ENCODE measurements at regions of chr6 and their contacts with region 1.

Region 1: DNA sequence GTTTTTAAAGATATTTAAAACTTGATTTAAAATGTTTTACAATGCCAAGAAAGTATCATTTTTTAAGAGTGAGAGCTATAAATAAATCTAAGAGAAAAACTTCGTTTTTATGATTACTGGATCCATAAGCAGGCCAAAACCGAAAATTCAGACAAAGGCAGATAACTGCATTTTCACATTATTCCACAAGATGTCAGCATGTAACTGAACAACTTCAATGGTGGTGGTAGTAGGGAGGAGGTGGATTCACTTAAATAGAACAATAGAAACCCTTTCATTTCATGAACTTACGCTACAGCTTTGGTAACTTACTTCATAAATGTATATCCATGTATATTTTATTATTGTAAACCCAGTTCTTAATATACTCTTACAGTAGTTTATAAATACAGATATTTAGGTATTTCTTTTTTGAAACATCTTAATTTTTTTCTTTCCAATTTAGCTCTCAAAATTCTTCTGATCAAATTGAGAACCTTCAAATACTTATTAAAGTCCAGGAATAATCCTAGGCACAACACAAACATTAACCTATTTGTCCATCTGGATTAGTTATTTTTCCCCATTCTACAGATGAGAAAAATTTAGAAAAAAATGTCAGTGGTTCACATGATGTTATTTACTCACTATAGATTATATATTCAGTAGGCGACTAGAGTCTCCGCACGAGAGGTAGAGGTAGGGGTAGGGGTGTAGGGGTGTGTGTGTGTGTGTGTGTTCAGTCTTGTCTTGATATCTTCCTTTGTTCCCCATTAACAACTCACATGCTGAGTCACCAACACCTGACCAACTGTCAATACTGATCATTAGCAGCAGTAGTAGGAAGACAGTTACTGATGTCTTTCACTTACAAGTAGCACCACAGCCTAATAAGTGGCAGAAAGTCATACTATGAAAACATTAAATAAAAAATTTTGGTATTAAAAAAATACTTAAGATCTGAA is 111.5 kb downstream of the ARHGAP18 start:
- DNase-seq: peak; percentile 84
- ATAC-seq: peak; percentile 91
- H3K4me3 ChIP-seq: no peak overlapping the region
- H3K27ac ChIP-seq: no peak overlapping the region
- H3K4me1 ChIP-seq: no peaks in the 10 kb centered on the region; the same call in 1 of the 2 replicates
- H3K27me3 ChIP-seq: no peaks in the 10 kb centered on the region
- CTCF ChIP-seq: peak; percentile 92
- POLR2A ChIP-seq: 0 out of 2 replicates have a peak, but pooled peaks have one; percentile 23
- RAD21 ChIP-seq: peak; percentile 94

Region 2: GRCh38 chr6:129498950-129499842 is 99.3 kb before region 1 on chr6:
- CTCF ChIA-PET with region 1: no interaction called
- POLR2A ChIA-PET with region 1: no interaction called
- dilution Hi-C with region 1: no loop called
- in situ Hi-C with region 1: no loop called
- intact Hi-C with region 1: loop called (anchors 1 kb)
- DNase-seq: peak; percentile 61
- ATAC-seq: peak; percentile 46
- H3K4me3 ChIP-seq: no peak overlapping the region
- H3K27ac ChIP-seq: peak overlapping the region; percentile 7; the same call in 1 of the 2 replicates
- H3K4me1 ChIP-seq: peaks cover 13% of the 10 kb centered on the region
- H3K27me3 ChIP-seq: no peaks in the 10 kb centered on the region
- CTCF ChIP-seq: peak; percentile 66
- POLR2A ChIP-seq: no peak
- RAD21 ChIP-seq: peak; percentile 71

Region 3: DNA sequence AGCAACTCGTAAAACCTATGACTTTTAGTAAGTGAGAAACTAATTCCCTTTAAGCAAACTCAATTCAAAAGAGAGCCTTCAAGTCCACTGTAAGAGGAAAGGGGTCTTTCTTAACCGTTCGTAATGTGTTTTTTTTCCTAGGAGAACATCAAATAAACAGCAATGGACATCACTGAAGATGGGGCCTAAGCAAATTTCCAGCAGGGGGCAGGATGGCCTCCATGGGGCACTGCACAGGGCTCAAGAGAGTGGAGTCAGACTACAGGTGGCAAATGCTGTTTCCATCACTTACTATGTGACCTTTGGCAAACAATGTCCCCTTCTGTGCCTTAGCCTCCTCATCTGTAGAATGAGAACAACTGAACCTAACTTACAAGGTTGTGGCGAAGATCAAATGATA is 22.7 kb after region 1 on chr6:
- CTCF ChIA-PET with region 1: no interaction called
- POLR2A ChIA-PET with region 1: no interaction called
- dilution Hi-C with region 1: no loop called
- in situ Hi-C with region 1: no loop called
- intact Hi-C with region 1: no loop called
- DNase-seq: no peak
- ATAC-seq: no peak
- H3K4me3 ChIP-seq: no peak overlapping the region
- H3K27ac ChIP-seq: no peak overlapping the region
- H3K4me1 ChIP-seq: 0 out of 2 replicates have a peak, but pooled peaks cover 1% of the 10 kb centered on the region
- H3K27me3 ChIP-seq: no peaks in the 10 kb centered on the region
- CTCF ChIP-seq: 0 out of 2 replicates have a peak, but pooled peaks have one; percentile 25
- POLR2A ChIP-seq: no peak
- RAD21 ChIP-seq: no peak; the same call in 1 of the 2 replicates

Region 4: DNA sequence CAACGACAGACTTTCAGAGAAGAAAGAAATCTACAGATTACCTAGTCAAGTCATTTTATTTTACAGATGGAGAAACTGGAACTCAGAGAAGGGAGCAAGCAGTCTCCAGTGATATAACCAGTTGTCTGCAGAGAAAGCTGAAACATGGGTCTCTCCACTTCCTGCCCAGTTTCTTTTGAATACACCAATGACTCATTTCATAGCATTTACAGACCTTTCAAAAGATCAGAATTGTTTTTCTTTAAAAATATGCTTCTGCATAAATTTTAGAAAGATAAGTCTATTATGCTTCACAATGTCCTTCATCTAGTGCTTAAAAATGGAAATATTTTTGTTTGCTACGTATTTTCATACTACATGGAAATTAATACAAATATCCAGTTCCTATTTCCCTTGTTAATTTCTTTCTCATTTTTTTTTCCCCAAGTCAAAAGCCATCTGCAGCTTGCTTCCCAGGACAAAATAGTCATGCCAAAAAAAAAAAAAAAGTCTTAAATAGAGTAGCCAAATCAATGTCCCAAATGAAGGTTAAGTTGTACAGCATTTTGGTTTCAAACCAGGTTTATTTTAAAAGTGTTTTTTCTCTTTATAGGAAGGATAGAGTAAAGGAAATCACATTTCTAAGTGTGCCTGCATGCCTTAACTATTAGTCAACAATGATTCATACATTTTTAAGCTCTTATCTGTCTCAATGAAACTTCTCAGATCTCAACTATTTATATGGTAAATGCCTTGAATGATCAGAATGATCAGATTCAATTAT is 74.5 kb after region 1 on chr6:
- CTCF ChIA-PET with region 1: no interaction called
- POLR2A ChIA-PET with region 1: no interaction called
- dilution Hi-C with region 1: no loop called
- in situ Hi-C with region 1: loop called (anchors 5 kb)
- intact Hi-C with region 1: no loop called
- DNase-seq: peak; percentile 87
- ATAC-seq: peak; percentile 80
- H3K4me3 ChIP-seq: no peak overlapping the region
- H3K27ac ChIP-seq: peak overlapping the region; percentile 95
- H3K4me1 ChIP-seq: peaks cover 14% of the 10 kb centered on the region
- H3K27me3 ChIP-seq: no peaks in the 10 kb centered on the region
- CTCF ChIP-seq: no peak
- POLR2A ChIP-seq: no peak
- RAD21 ChIP-seq: no peak

Region 5: DNA sequence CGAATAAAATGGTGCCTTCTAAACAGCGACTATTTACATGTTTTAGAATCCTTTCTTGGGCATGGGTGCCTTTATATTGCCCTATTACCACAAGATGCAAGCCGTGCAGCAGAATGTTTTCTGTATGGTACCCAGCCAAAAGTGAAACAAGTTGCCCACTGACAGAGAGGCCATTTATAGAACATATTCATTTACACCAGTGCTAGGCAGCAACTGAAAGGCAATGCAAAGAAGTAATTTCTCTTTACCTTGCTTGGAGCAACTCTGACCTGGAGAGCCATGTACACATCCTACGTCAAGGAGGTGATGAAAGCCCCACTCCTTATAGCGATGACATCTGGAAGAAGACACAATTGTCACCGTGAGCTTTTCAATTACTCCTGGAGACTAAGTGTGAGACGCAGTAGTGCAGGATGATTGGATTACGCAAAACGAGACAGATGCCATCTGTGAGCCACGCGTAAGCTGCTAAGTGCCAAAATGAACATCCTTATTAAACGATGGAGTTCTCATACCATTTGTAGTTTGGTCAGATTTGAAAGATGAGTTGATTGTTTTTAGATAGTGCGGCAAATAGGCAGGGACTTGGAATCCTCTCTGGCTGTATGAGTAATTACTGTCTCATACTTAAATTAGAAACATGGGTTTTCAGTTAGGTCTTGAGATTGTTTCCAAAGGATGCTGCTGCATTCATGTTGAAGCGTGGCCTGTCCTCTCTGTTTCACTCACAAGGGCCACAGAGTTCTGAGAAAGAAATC is 262.6 kb after region 1 on chr6 and contains the start of gene TMEM244:
- CTCF ChIA-PET with region 1: no interaction called
- POLR2A ChIA-PET with region 1: no interaction called
- dilution Hi-C with region 1: no loop called
- in situ Hi-C with region 1: no loop called
- intact Hi-C with region 1: loop called (anchors 5 kb)
- DNase-seq: peak; percentile 70
- ATAC-seq: peak; percentile 43
- H3K4me3 ChIP-seq: no peak within 1 kb of the TSS; the same call in 1 of the 2 replicates
- H3K27ac ChIP-seq: peak within 1 kb of the TSS; percentile 7; the same call in 1 of the 2 replicates
- H3K4me1 ChIP-seq: peaks cover 10% of the 10 kb centered on the region
- H3K27me3 ChIP-seq: no peaks in the 10 kb centered on the region
- CTCF ChIP-seq: no peak
- POLR2A ChIP-seq: no peak
- RAD21 ChIP-seq: no peak
- total RNA-seq, gene TMEM244: 0.28 and 0.36 TPM in 2 replicates

Region 6: GRCh38 chr6:129981598-129981997 is 383.1 kb after region 1 on chr6:
- CTCF ChIA-PET with region 1: no interaction called
- POLR2A ChIA-PET with region 1: no interaction called
- dilution Hi-C with region 1: no loop called
- in situ Hi-C with region 1: no loop called
- intact Hi-C with region 1: loop called (anchors 1 kb)
- DNase-seq: peak; percentile 33
- ATAC-seq: peak; percentile 37; the same call in 1 of the 2 replicates
- H3K4me3 ChIP-seq: no peak overlapping the region
- H3K27ac ChIP-seq: no peak overlapping the region
- H3K4me1 ChIP-seq: no peaks in the 10 kb centered on the region
- H3K27me3 ChIP-seq: no peaks in the 10 kb centered on the region
- CTCF ChIP-seq: peak; percentile 48
- POLR2A ChIP-seq: no peak
- RAD21 ChIP-seq: peak; percentile 41